Dendritic cell treated with granulocyte-macrophage colony-stimulating factor and Interleukin-4, amounts not matched to agents 40 ng/mL and 50 ng/mL, for 4 days (primary cell): ENCODE measurements at regions of chr7 and their contacts with region 1.

Region 1: GRCh38 chr7:143222782-143223181 is 945 bp downstream of the TAS2R40 start:
- H3K4me3 Mint-ChIP-seq: peak overlapping the region; percentile 27
- H3K27ac Mint-ChIP-seq: peak overlapping the region; percentile 85
- H3K4me1 Mint-ChIP-seq: peaks cover 45% of the 10 kb centered on the region
- H3K27me3 Mint-ChIP-seq: no peaks in the 10 kb centered on the region

Region 2: DNA sequence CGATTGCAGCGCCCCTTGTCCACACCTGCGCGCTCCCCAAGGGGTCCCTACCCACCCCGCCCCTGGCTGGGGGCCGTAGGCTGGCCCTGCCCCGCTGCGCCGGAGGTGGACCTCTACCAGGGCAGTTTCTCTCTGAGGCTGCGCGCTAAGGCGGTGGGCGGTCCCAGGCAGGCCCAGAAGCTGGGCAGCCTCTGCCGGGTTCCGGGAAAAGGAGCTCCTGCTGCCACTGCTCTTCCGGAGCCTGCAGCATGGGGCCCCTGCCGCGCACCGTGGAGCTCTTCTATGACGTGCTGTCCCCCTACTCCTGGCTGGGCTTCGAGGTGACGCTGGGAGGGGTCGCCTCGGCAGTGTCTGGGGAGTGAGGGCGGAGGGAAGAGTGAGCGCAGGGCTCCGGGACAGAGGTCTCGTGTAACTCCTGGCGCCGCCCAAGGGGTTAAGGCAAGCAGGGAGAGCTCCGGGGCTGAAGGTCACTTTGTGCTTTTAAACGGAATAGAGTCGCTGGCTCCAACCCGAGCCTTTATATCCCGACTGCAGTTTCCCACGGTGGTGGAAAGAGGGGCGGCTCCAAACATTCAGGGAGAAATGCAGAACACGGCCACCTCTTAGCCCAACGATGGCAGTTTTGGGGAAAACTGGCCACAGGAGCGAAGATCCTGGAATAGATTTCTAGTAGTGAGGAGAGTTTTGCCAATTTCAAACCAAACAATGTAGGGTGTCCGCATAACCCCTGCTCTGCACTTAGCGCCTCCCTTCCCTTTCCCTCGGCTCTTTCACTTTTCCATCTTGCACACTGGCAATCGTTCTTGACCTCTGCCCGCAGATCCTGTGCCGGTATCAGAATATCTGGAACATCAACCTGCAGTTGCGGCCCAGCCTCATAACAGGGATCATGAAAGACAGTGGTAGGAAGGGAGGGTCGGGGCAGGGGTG is 40.7 kb after region 1 on chr7 and contains the start of gene GSTK1:
- intact Hi-C with region 1: loop called (anchors 1 kb)
- H3K4me3 Mint-ChIP-seq: peak within 1 kb of the TSS; percentile 92
- H3K27ac Mint-ChIP-seq: peak within 1 kb of the TSS; percentile 97
- H3K4me1 Mint-ChIP-seq: peaks cover 36% of the 10 kb centered on the region
- H3K27me3 Mint-ChIP-seq: no peaks in the 10 kb centered on the region